ENCODE measurements at regions of chr3 and their contacts with region 1.

Region 1: DNA sequence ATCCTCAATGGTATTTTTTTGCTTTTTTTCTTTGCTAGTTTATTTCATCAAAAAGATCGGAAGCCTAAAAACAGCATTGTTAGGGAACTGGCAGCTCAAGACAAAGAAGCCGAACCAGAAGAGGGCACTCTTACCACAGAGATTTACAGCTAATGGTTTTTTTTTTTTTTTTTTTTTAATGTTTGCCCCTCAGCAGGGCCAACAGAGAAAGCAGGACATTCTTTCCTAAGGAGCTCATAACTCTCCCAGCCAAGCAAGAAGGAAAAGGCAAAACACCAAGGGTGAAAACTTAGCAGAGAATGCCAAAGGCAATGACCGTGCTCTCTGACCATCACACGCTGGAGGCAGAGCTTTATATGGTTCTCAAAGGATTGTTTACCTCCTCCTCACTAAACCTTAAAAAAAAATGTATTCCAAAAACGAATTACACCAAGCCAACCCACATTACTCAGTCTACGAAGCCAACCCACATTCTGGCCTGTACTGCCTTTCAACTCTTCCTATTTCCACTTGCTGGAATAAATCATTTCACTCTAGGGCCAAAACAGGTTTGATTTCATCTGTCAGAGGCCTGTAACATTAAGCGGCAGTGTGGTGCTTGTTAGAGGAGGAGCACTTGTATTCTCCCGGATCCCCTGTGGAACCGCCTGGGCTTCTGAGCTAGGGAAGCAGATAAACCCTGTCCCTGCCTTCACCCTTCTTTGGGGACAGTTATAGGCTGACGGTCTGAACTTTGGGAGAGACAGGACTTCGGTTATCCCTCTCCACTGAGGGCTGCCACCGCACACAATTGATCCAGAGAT is 35.6 kb upstream of the GYG1 start:
- DNase-seq: peak; percentile 48
- ATAC-seq: peak; percentile 69
- H3K4me3 ChIP-seq: no peak overlapping the region; a peak in 1 of 4 replicates
- H3K27ac ChIP-seq: no peak overlapping the region
- H3K4me1 ChIP-seq: peaks cover 0 to 5% of the 10 kb centered on the region in 2 experiments; a peak in 1 of 4 replicates
- H3K27me3 ChIP-seq: no peaks in the 10 kb centered on the region
- CTCF ChIP-seq: peak; percentile 44 to 89 (median 75)
- POLR2A ChIP-seq: no peak
- RAD21 ChIP-seq: peak; percentile 87

Region 2: DNA sequence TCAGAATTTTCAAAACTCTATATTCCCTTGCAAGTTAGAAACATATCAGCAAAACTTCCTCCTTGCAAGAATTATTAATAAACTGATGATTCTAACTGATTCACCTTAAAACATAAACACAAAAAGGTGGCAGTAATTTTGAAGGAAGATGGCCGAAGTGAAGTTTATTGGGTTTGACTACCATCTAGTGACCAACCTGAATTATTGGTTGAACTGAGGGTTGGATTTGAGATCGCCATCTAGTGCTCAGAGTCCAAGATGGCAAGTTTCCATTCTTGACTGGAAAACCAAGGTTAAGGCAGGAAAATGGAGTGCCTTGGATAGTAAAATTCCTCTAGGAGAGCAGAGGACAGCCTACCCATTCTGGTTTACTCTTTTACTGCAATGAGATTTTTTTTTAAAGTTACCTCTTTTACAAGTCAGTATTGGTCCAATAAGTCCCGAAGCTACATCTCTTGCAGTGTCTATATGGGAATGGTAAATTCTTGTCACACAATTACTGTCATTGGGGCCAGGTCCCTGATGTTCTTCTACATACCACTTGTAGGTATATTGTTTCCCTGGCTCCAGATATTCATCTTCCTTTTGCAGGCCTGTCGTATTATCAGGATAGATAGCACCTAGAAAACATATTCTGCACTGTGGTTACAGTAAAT is 317.5 kb after region 1 on chr3:
- CTCF ChIA-PET with region 1: interaction called, 15 read pairs
- POLR2A ChIA-PET with region 1: no interaction called
- RAD21 ChIA-PET with region 1: interaction called in 1 of 2 experiments, 3 read pairs
- intact Hi-C with region 1: loop called (anchors 1 kb)
- DNase-seq: peak; percentile 86
- ATAC-seq: peak; percentile 95
- H3K4me3 ChIP-seq: no peak overlapping the region
- H3K27ac ChIP-seq: no peak overlapping the region
- H3K4me1 ChIP-seq: no peaks in the 10 kb centered on the region
- H3K27me3 ChIP-seq: no peaks in the 10 kb centered on the region
- CTCF ChIP-seq: peak; percentile 90 to 100 (median 98)
- POLR2A ChIP-seq: no peak
- RAD21 ChIP-seq: peak; percentile 99

Region 3: DNA sequence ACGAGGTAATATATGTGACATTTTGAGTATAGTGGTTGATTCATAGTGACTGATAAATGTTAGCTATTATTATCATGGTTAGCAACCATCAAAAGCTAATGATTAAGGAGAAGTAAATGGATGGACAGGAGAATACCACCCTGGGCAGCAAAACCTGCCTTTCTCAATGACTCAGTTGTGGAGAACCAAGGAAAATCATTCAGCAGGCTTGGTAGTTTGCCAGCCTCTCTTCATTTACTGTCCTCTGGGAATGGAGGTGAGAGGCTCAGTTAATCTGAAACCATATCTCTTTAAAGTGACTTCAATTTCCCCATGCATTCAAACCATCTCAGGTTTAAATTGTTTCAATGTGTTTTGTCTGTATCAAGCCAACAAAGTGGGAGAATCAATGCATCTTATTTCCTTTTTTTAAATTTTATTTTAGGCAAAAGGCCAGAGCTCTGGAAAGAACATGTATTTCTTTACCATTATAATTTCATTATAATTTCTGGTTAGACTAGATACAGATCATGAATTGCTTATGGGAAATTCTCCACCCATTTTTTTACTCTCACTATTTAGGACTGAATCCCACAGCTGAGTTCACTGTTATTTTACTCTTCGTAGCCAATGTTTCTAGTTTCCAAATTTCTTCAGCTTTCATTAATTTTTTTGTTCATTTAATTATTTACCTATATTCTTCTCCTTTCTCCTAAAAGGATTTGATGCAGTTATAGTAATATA is 375.0 kb after region 1 on chr3:
- CTCF ChIA-PET with region 1: interaction called, 16 read pairs
- POLR2A ChIA-PET with region 1: no interaction called
- RAD21 ChIA-PET with region 1: interaction called in 1 of 2 experiments, 5 read pairs
- intact Hi-C with region 1: loop called (anchors 1 kb)
- DNase-seq: no peak
- ATAC-seq: no peak
- H3K4me3 ChIP-seq: no peak overlapping the region
- H3K27ac ChIP-seq: no peak overlapping the region
- H3K4me1 ChIP-seq: peaks cover 0 to 39% of the 10 kb centered on the region in 2 experiments; a peak in 2 of 4 replicates
- H3K27me3 ChIP-seq: no peaks in the 10 kb centered on the region
- CTCF ChIP-seq: no peak
- POLR2A ChIP-seq: no peak
- RAD21 ChIP-seq: no peak

Region 4: GRCh38 chr3:149480325-149481017 is 524.7 kb after region 1 on chr3:
- CTCF ChIA-PET with region 1: interaction called, 4 read pairs
- POLR2A ChIA-PET with region 1: no interaction called
- RAD21 ChIA-PET with region 1: interaction called in 1 of 2 experiments, 4 read pairs
- intact Hi-C with region 1: loop called (anchors 5 kb)
- DNase-seq: peak; percentile 76
- ATAC-seq: peak; percentile 100
- H3K4me3 ChIP-seq: no peak overlapping the region
- H3K27ac ChIP-seq: no peak overlapping the region
- H3K4me1 ChIP-seq: peaks cover 0 to 6% of the 10 kb centered on the region in 2 experiments; a peak in 3 of 4 replicates
- H3K27me3 ChIP-seq: no peaks in the 10 kb centered on the region
- CTCF ChIP-seq: peak; percentile 92 to 97 (median 93); a peak in 5 of 6 replicates
- POLR2A ChIP-seq: no peak
- RAD21 ChIP-seq: peak; percentile 98

Region 5: DNA sequence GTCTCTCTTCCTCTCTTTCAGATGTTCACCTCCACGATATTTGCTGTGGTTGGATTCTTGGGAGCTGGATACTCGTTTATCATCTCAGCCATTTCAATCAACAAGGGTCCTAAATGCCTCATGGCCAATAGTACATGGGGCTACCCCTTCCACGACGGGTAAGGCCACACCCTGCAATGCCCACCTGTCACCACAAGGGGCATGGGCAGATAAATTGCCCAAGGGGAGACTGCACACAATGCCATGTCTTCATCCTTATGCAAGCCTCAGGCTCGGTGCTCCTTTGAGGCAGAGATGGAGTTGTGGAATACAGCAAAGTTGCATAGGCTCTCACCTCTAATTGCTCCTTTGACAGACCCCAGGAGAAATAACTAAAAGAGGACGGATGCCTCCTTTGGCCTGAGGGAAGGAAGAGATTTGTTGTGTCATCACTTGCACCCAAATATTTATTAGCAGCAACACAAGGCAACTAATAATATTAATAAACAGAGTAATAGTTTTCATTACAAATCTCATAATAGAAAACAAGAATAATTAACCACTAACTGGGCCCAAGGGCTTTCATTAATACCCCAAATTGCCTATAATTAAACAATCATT is 532.0 kb after region 1 on chr3:
- CTCF ChIA-PET with region 1: interaction called, 16 read pairs
- POLR2A ChIA-PET with region 1: no interaction called
- RAD21 ChIA-PET with region 1: no interaction called
- intact Hi-C with region 1: loop called (anchors 5 kb)
- DNase-seq: peak; percentile 61
- ATAC-seq: peak; percentile 84
- H3K4me3 ChIP-seq: no peak overlapping the region
- H3K27ac ChIP-seq: no peak overlapping the region
- H3K4me1 ChIP-seq: peaks cover 0 to 9% of the 10 kb centered on the region in 2 experiments; a peak in 1 of 4 replicates
- H3K27me3 ChIP-seq: no peaks in the 10 kb centered on the region
- CTCF ChIP-seq: peak; percentile 9 to 86 (median 86); a peak in 5 of 6 replicates
- POLR2A ChIP-seq: no peak
- RAD21 ChIP-seq: no peak